SK-N-SH (cell line): ENCODE measurements at regions of chr5 and their contacts with region 1.

Region 1: GRCh38 chr5:5492087-5492933 is 69.8 kb downstream of the ICE1 start:
- DNase-seq: peak; percentile 81
- H3K4me3 ChIP-seq: peak overlapping the region in 1 of 2 experiments; percentile 41; a peak in 1 of 4 replicates
- H3K27ac ChIP-seq: peak overlapping the region in 1 of 2 experiments; percentile 32; a peak in 2 of 4 replicates
- H3K4me1 ChIP-seq: peaks cover 0 to 16% of the 10 kb centered on the region in 2 experiments; a peak in 2 of 4 replicates
- H3K27me3 ChIP-seq: no peaks in the 10 kb centered on the region
- CTCF ChIP-seq: peak; percentile 78
- EP300 ChIP-seq: 0 out of 4 replicates have a peak, but pooled peaks of 1 of the 2 experiments have one; percentile 27
- RAD21 ChIP-seq: peak; percentile 95

Region 2: GRCh38 chr5:5558102-5558501 is 65.8 kb after region 1 on chr5:
- CTCF ChIA-PET with region 1: interaction called, 11 read pairs
- POLR2A ChIA-PET with region 1: no interaction called
- DNase-seq: no peak
- H3K4me3 ChIP-seq: no peak overlapping the region
- H3K27ac ChIP-seq: peak overlapping the region in 1 of 2 experiments; percentile 99; a peak in 2 of 4 replicates
- H3K4me1 ChIP-seq: peaks cover 0 to 33% of the 10 kb centered on the region in 2 experiments; a peak in 2 of 4 replicates
- H3K27me3 ChIP-seq: no peaks in the 10 kb centered on the region
- CTCF ChIP-seq: no peak
- EP300 ChIP-seq: no peak
- RAD21 ChIP-seq: no peak

Region 3: DNA sequence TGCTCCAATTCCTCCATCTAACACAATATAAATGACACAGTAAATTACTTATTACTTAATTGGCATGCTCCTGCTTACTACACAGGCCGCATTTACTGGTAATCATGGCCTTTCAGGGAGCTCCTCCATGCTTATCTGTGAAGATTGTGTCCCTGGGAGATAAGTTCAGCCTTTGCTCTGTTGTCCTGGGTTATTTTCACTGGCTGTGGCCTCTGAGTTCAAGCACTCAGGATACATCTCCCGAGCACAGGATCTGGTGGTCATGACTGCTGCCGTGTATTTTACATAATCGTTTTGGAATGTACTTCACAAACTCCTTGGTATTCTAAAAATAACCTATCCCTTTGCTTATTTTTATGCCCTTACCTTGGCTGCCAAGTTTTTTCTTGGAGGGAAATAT is 145.9 kb after region 1 on chr5:
- CTCF ChIA-PET with region 1: interaction called, 30 read pairs
- POLR2A ChIA-PET with region 1: no interaction called
- DNase-seq: peak; percentile 22
- H3K4me3 ChIP-seq: no peak overlapping the region
- H3K27ac ChIP-seq: peak overlapping the region in 1 of 2 experiments; percentile 98; a peak in 2 of 4 replicates
- H3K4me1 ChIP-seq: peaks cover 0 to 41% of the 10 kb centered on the region in 2 experiments; a peak in 2 of 4 replicates
- H3K27me3 ChIP-seq: no peaks in the 10 kb centered on the region
- CTCF ChIP-seq: no peak
- EP300 ChIP-seq: peak in 1 of 2 experiments; percentile 80; a peak in 2 of 4 replicates
- RAD21 ChIP-seq: peak; percentile 25; the same call in 1 of the 2 replicates

Region 4: GRCh38 chr5:5710471-5710870 is 218.2 kb after region 1 on chr5:
- CTCF ChIA-PET with region 1: interaction called, 32 read pairs
- POLR2A ChIA-PET with region 1: interaction called, 13 read pairs
- DNase-seq: peak; percentile 65
- H3K4me3 ChIP-seq: no peak overlapping the region
- H3K27ac ChIP-seq: peak overlapping the region; percentile 36 to 100; a peak in 3 of 4 replicates
- H3K4me1 ChIP-seq: peaks cover 0 to 39% of the 10 kb centered on the region in 2 experiments; a peak in 2 of 4 replicates
- H3K27me3 ChIP-seq: no peaks in the 10 kb centered on the region
- CTCF ChIP-seq: no peak
- EP300 ChIP-seq: peak; percentile 55 to 99
- RAD21 ChIP-seq: peak; percentile 62

Region 5: GRCh38 chr5:6576861-6577501 is 1084.7 kb after region 1 on chr5:
- CTCF ChIA-PET with region 1: interaction called, 21 read pairs
- POLR2A ChIA-PET with region 1: no interaction called
- DNase-seq: peak; percentile 74
- H3K4me3 ChIP-seq: no peak overlapping the region
- H3K27ac ChIP-seq: no peak overlapping the region
- H3K4me1 ChIP-seq: peaks cover 3 to 4% of the 10 kb centered on the region in 2 experiments; a peak in 1 of 4 replicates
- H3K27me3 ChIP-seq: no peaks in the 10 kb centered on the region
- CTCF ChIP-seq: peak; percentile 68
- EP300 ChIP-seq: no peak
- RAD21 ChIP-seq: peak; percentile 85